ENCODE measurements at regions of chr12 and their contacts with region 1.

Region 1: GRCh38 chr12:127280393-127281275 is 986.3 kb upstream of the TMEM132C start:
- DNase-seq: peak; percentile 49 to 99
- H3K4me3 ChIP-seq: peak overlapping the region in 2 of 4 experiments; percentile 15 to 53; a peak in 5 of 8 replicates
- H3K27ac ChIP-seq: no peak overlapping the region
- H3K4me1 ChIP-seq: no peaks in the 10 kb centered on the region; a peak in 1 of 7 replicates
- H3K27me3 ChIP-seq: no peaks in the 10 kb centered on the region
- CTCF ChIP-seq: peak; percentile 96 to 100 (median 100)
- EP300 ChIP-seq: peak in 1 of 2 experiments; percentile 92; a peak in 1 of 3 replicates
- POLR2A ChIP-seq: no peak
- RAD21 ChIP-seq: peak; percentile 75 to 86

Region 2: DNA sequence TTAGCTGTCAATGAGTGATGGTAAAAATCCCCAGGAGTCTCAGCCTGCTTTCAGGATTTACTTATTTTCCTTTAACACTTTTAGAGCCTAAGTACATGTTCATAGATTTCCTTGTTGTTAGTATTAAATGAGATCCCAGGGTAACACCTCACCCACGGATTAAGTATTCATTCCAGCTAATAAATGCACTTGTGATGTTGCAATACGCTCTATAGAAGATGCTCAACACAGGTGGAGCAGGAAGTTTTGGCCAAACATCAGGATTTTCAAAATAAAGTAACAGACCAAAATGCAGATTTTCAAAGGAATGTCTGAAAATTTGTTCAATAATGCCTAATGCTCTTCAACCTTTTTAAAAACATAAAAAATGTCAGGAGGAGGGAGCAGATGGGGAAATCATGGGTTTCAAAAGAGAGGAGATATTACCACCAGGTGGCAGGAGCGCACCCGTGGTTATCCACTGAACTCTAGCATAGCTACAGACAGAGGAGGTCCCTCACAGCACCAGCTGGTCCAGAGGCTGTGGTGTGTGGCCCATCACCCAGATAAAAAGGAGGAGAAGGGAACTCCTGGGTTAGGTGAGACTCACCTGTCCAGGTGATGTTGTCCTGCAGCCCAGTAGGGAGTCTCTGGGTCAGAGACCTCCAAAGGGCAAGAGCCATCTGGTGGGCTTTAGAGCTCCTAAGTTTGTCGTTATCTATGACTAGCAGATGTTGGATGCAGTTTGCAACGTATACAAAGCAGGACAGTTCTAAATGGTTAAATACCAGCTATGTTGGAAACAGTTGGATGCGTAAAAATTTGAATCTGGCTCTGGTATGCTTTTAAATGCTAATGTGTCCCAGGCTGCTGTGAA is 172.0 kb before region 1 on chr12:
- CTCF ChIA-PET with region 1: interaction called, 43 read pairs
- POLR2A ChIA-PET with region 1: no interaction called
- DNase-seq: peak in 1 of 2 experiments; percentile 64
- H3K4me3 ChIP-seq: no peak overlapping the region
- H3K27ac ChIP-seq: no peak overlapping the region
- H3K4me1 ChIP-seq: peaks cover 0 to 3% (median 0%) of the 10 kb centered on the region in 4 experiments; a peak in 4 of 7 replicates
- H3K27me3 ChIP-seq: no peaks in the 10 kb centered on the region
- CTCF ChIP-seq: peak; percentile 44 to 75 (median 65)
- EP300 ChIP-seq: no peak
- POLR2A ChIP-seq: no peak
- RAD21 ChIP-seq: peak; percentile 86

Region 3: GRCh38 chr12:127270193-127270592 is 10.4 kb before region 1 on chr12:
- CTCF ChIA-PET with region 1: interaction called, 55 read pairs
- POLR2A ChIA-PET with region 1: no interaction called
- DNase-seq: no peak
- H3K4me3 ChIP-seq: no peak overlapping the region
- H3K27ac ChIP-seq: no peak overlapping the region
- H3K4me1 ChIP-seq: no peaks in the 10 kb centered on the region
- H3K27me3 ChIP-seq: no peaks in the 10 kb centered on the region
- CTCF ChIP-seq: no peak
- EP300 ChIP-seq: no peak
- POLR2A ChIP-seq: no peak
- RAD21 ChIP-seq: no peak

Region 4: DNA sequence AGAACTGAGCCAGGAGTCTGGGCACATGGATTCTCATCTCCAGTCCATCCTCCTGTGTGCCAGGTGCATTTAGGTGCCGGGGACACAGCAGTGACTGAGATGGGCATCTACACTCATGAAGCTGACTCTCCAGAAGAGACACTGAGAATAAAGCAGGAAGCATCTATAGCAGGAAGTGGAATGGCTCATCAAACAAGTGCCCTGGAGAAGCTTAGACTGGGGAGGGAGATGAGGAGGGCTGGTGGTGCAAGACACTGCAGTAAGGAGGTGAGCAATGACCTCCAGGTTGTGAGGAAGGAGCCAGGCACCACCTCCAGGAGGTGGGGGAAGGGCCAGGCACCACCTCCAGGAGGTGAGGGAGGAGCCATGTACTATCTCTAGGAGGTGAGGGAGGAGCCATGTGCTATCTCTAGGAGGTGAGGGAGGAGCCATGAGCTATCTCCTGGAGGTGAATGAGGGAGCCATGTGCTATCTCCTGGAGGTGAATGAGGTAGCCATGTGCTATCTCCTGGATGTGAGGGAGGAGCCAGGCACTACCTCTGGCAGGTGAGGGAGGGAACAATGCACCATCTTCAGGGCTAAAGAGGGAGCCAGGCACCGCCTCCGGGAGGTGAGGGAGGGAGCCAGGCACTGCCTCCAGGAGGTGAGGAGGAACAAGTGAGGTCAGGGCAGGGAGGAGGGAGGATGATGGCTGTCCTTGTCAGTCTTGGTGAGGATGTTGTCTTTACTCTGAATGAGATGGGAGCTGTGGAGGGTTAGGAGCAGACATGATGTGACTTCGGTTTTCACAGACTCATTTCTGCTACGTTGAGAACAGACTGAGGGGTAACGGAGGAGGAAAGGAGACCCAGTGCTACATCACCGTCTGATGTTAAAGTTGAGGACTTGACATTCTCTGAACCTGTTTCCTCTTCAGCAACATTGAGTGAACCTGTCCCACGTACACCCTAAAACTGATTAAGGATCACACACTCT is 24.4 kb after region 1 on chr12:
- CTCF ChIA-PET with region 1: interaction called, 13 read pairs
- POLR2A ChIA-PET with region 1: no interaction called
- DNase-seq: no peak
- H3K4me3 ChIP-seq: no peak overlapping the region
- H3K27ac ChIP-seq: no peak overlapping the region
- H3K4me1 ChIP-seq: no peaks in the 10 kb centered on the region
- H3K27me3 ChIP-seq: no peaks in the 10 kb centered on the region
- CTCF ChIP-seq: no peak
- EP300 ChIP-seq: no peak
- POLR2A ChIP-seq: no peak
- RAD21 ChIP-seq: no peak

Region 5: DNA sequence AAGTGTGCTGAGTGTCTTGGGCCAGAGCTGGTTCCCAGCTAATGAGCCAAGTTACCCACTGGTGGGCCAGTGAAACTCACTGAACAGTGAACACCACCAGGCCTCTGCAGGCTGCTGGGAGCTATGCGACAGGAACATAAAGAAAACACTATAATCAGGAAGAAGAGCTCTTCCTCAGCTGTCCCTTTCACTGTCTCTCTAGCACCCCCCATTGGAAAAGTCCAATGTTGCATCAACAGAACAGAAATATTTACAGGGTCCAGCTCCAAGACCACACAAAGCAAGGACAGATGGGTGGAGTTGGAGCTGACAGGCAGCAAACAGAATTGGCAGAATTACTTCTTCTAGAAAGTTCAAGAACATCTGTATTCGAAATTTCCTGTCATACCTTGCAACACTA is 82.8 kb after region 1 on chr12:
- CTCF ChIA-PET with region 1: interaction called, 15 read pairs
- POLR2A ChIA-PET with region 1: no interaction called
- DNase-seq: peak in 1 of 2 experiments; percentile 60
- H3K4me3 ChIP-seq: no peak overlapping the region
- H3K27ac ChIP-seq: no peak overlapping the region
- H3K4me1 ChIP-seq: no peaks in the 10 kb centered on the region
- H3K27me3 ChIP-seq: no peaks in the 10 kb centered on the region
- CTCF ChIP-seq: peak in 2 of 3 experiments; percentile 65 to 70; a peak in 3 of 4 replicates
- EP300 ChIP-seq: no peak
- POLR2A ChIP-seq: no peak
- RAD21 ChIP-seq: peak; percentile 73 to 82

Region 6: GRCh38 chr12:127548123-127548553 is 267.5 kb after region 1 on chr12:
- CTCF ChIA-PET with region 1: no interaction called
- POLR2A ChIA-PET with region 1: no interaction called
- DNase-seq: no peak
- H3K4me3 ChIP-seq: no peak overlapping the region
- H3K27ac ChIP-seq: no peak overlapping the region
- H3K4me1 ChIP-seq: peaks cover 0 to 6% (median 0%) of the 10 kb centered on the region in 4 experiments; a peak in 2 of 7 replicates
- H3K27me3 ChIP-seq: peaks cover 0 to 1% (median 0%) of the 10 kb centered on the region in 4 experiments; a peak in 1 of 7 replicates
- CTCF ChIP-seq: no peak
- EP300 ChIP-seq: no peak
- POLR2A ChIP-seq: no peak
- RAD21 ChIP-seq: no peak